Dendritic cell treated with granulocyte-macrophage colony-stimulating factor and Interleukin-4, amounts not matched to agents 40 ng/mL and 50 ng/mL, for 4 days (primary cell): ENCODE measurements at regions of chr6 and their contacts with region 1.

Region 1: GRCh38 chr6:47631269-47631772 is 67.1 kb upstream of the ADGRF4 start:
- H3K4me3 Mint-ChIP-seq: no peak overlapping the region
- H3K27ac Mint-ChIP-seq: no peak overlapping the region
- H3K4me1 Mint-ChIP-seq: no peaks in the 10 kb centered on the region
- H3K27me3 Mint-ChIP-seq: peaks cover 2% of the 10 kb centered on the region

Region 2: GRCh38 chr6:47567586-47567985 is 63.7 kb before region 1 on chr6:
- intact Hi-C with region 1: no loop called
- H3K4me3 Mint-ChIP-seq: no peak overlapping the region
- H3K27ac Mint-ChIP-seq: no peak overlapping the region
- H3K4me1 Mint-ChIP-seq: no peaks in the 10 kb centered on the region
- H3K27me3 Mint-ChIP-seq: no peaks in the 10 kb centered on the region

Region 3: DNA sequence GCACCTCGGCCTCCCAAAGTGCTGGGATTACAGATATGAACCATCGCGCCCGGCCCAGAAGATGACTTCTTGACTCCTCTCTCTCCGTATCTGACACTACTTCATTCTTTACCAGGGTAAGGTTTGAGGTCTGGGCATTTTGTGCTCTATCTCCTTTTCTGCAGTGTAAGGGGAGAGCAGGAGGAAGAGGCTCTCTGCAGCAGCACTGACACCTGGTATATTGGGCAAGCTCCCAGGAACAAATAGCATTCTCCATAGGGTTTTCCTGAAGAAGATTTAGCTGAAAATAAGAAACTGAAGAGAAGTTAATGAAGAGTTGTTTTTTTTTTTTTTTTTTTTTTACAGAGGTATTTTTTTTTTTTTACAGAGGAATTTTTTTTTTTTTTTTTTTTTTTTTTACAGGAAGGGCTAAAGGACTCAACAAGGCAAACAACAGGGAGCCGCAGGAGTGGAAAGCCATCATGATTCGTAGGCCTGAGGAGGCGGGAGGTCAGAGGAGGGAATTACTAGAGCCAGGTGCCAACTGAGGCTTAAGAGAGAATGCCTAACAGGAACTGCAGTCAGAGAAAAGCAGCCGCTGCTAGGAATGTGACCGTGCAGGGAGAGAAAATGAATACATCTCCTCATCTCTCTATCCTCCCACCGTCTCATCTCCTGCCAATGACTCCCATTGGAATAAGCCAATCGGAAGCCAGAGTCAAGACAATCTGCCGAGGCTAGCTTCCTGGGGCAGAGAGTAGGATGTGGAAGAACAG is 32.3 kb after region 1 on chr6:
- intact Hi-C with region 1: no loop called
- H3K4me3 Mint-ChIP-seq: no peak overlapping the region
- H3K27ac Mint-ChIP-seq: no peak overlapping the region
- H3K4me1 Mint-ChIP-seq: no peaks in the 10 kb centered on the region
- H3K27me3 Mint-ChIP-seq: peaks cover 2% of the 10 kb centered on the region

Region 4: GRCh38 chr6:47733879-47734558 is 102.7 kb after region 1 on chr6:
- intact Hi-C with region 1: loop called (anchors 5 kb)
- H3K4me3 Mint-ChIP-seq: no peak overlapping the region
- H3K27ac Mint-ChIP-seq: no peak overlapping the region
- H3K4me1 Mint-ChIP-seq: no peaks in the 10 kb centered on the region
- H3K27me3 Mint-ChIP-seq: peaks cover 5% of the 10 kb centered on the region

Region 5: DNA sequence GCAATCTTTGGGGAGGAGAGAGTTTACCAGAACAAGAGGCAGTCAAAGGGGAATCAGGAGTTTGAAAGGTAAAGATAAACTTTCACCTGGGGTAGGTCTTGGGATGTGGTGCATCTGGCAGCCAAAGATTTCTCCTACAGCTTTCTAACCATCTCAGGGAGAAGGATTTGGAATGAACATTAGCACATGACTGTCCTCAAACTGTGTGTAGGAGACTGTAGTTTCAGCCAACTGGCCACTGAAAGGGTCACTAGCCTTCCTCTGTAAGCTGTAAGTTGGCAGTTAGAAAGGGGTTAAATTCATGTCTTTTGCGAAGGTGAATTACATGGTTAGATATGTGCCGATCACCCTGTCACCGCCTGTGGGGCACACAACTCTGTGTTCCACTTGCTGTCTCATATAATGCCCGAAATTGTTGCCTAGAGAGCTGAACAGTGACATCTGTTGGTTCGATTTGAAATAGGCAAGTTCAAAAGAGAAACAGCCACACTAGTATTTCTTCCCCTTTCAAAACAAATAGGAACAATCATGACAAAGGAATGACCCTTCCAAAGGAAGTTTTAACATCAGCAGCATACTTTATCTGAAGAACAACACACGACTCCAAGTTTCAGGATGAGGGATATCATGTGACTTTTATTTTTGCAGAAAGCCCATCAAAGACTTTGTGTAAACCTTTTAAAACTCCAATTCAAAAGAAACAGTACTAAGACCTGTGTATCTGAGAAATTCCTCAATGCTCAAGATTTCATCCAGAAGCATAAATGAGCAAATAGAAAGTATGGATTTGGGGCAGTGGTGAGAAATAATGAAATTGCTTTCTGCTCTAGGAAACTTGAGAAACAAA is 149.4 kb after region 1 on chr6:
- intact Hi-C with region 1: loop called (anchors 2 kb)
- H3K4me3 Mint-ChIP-seq: no peak overlapping the region
- H3K27ac Mint-ChIP-seq: no peak overlapping the region
- H3K4me1 Mint-ChIP-seq: peaks cover 5% of the 10 kb centered on the region
- H3K27me3 Mint-ChIP-seq: peaks cover 10% of the 10 kb centered on the region

Region 6: GRCh38 chr6:49409951-49410542 is 1778.7 kb after region 1 on chr6:
- intact Hi-C with region 1: loop called (anchors 5 kb)
- H3K4me3 Mint-ChIP-seq: no peak overlapping the region
- H3K27ac Mint-ChIP-seq: no peak overlapping the region
- H3K4me1 Mint-ChIP-seq: no peaks in the 10 kb centered on the region
- H3K27me3 Mint-ChIP-seq: no peaks in the 10 kb centered on the region